HEK293T (cell line): ENCODE measurements at regions of chr3 and their contacts with region 1.

Region 1: DNA sequence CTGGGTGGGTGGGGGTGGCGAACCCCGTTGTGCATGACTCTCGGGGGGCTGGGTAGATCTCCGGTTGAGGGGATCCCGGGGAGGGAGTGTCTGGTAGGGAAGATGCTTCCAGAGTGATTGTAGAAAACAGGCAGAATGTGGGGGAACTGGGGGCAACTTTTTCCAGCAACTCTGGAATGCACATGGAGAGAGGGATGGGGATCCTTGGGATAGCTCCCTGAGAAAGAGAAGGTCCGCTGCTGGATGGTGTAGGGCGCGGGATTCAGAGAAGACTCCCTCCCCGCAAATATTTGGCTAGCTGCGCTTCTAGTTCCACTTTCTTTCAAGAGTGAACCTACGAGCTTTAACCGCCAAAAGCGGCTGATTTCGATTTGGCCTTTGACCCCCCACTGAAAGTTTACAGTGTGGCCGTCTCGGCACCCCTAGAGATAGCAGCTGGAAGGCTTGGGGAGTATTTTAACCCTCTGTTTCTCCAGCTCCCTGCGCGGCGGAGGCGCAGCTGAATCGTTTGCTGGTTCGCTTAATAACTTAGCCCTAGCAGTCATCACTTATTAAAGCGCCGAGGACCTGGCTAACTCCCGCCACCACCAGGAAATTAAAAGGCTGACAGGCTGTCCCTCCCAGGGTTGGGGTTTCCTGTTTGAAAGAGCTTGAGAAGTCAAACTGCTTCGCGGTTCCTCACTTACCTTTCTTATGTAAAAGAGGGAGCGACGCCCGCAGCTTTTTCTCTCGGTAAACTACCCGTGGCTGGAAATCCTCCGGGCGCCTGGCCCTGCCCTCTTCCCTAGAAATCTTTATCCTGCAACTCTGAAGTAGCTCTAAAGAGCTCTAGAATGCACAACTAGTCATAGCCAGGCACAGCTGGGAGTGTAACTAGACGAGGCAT is 1.2 kb downstream of the PHLDB2 start:
- DNase-seq: peak; percentile 69

Region 2: GRCh38 chr3:111616417-111617105 is 243.7 kb before region 1 on chr3:
- CTCF ChIA-PET with region 1: no interaction called
- POLR2A ChIA-PET with region 1: no interaction called
- DNase-seq: no peak

Region 3: GRCh38 chr3:111735271-111735758 is 124.9 kb before region 1 on chr3:
- CTCF ChIA-PET with region 1: no interaction called
- POLR2A ChIA-PET with region 1: interaction called, 10 read pairs
- DNase-seq: no peak

Region 4: GRCh38 chr3:111837112-111837511 is 23.1 kb before region 1 on chr3:
- CTCF ChIA-PET with region 1: no interaction called
- POLR2A ChIA-PET with region 1: no interaction called
- DNase-seq: no peak